ENCODE measurements at regions of chr14 and their contacts with region 1.

Region 1: DNA sequence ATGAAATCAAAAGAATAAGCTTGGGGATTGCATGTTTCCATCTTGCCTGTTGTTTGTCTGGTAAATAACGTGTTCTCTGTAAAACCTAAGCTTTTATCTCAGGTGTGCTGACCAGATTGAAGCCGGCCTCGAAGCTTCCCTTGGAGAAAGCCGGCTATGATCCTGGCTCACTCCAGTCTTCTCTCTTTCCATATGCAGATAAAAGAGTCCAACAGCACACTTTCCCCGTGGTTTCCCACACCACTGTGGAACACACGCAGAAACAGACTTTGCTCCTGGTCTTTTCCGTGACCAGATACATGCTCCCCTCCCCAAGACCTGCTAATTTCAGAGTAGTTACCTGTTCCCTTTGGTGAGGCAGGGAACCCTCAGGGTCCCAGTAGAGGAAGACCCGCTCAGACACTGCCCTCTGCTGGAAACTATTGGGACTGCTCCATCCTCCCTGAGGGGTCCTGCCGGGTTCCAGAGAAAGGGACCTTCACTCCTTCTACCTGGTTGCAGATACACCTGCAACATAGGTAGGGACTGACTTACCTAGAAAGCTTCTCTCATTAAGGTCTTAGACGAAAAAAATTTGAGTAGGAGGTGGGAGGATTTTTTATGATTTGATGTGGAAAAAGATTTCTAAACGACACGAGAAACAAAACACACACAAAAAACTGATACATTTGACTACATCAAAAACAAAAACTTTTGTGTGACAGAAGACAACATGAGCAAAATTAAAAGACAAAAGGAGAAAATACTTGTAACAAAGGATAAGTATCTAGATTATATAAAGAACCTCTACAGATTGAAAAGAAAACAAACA is 415.5 kb upstream of the CCDC196 start:
- DNase-seq: no peak
- ATAC-seq: peak; percentile 52

Region 2: DNA sequence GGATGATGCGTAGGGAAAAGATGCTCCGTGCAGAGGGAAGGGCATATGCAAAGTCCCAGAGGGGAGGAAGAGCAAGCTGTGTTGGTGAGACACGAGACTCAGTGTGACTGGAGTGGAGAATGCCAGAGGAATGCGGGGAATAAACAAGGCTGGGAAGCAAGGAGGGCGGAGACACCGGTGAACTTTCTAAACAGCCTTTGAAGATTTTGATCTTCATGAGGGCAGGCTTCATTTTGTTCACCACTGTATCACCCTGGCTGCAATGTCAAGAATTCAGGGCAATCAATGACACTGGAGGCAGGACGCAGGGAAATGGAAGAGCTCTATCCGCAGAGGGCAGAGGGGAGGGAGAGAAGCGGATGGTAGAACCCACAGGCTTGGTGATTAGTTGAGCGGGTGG is 122.4 kb before region 1 on chr14:
- intact Hi-C with region 1: no loop called
- DNase-seq: no peak
- ATAC-seq: no peak

Region 3: DNA sequence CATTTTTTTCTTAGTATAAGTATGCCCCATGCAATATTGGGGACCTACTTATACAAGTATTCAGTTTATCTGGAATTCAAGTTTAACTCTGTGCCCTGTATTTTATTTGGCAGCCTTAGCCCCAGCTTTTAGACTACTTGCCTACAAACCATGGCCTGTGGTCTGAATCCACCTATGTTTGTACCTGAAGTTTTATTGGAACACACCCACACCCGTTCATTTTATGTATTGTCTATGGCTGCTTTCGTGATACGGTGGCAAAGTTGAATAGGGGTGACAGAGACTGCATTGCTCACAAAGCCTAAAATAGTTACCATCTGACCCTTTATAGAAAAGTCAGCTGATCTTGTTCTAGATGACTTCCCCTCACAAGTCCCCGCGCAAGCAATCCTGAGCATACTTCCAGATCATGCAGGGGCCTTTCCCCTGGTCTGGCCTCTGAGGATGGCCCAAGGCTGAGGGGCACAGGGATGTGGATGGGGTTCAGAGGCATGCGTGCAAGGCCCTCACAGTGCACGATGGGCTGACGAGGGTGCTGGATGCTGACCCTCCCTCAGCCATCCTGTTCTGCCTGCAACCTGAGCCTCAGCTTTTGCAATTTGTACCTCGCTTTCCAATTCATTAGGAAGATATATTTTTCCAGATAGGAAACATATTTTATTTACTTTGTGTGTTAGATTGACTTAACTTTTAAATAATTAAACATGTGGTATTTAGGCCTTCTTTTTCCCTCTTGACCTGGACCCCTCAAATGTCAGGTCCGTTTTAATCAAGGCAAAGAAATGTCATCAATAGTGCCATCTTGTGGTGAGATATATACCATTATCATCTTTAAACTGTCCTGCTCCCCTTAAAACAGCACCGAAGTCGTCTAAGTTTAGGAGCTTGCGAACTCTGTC is 111.8 kb before region 1 on chr14:
- intact Hi-C with region 1: loop called (anchors 2 kb)
- DNase-seq: no peak
- ATAC-seq: peak; percentile 62